Endothelial cell of umbilical vein (primary cell): ENCODE measurements at regions of chr17 and their contacts with region 1.

Region 1: GRCh38 chr17:915538-916201 is 63.9 kb downstream of the NXN start:
- DNase-seq: peak; percentile 94
- H3K4me3 ChIP-seq: peak overlapping the region in 1 of 3 experiments; percentile 0
- H3K27ac ChIP-seq: peak overlapping the region; percentile 79
- H3K4me1 ChIP-seq: peaks cover 31% of the 10 kb centered on the region
- H3K27me3 ChIP-seq: no peaks in the 10 kb centered on the region
- CTCF ChIP-seq: no peak
- POLR2A ChIP-seq: no peak

Region 2: DNA sequence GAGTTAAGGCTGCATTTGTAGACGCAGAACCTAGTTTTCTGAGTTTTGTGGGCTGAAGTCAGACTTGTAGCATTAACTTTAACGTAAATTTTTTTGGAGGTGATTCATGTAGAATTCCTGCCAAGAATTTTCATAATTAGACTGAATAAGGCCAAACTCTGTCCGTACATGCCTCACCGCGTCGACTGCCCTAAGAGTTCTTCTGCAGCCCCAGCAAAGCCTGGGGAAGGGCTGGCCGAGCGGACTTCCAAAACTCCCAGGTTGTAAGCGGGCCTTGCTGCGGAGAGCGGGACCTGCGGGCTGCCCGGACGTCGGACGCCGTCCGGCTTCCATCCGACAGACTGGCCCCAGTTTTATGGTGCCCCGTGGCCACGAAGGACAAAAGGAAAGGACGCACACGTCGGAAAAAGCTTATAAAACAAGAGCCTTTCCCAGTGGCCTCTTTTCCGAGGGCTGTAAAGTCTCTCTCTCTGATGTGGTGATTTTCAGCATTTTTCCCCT is 11.6 kb before region 1 on chr17:
- CTCF ChIA-PET with region 1: interaction called, 18 read pairs
- POLR2A ChIA-PET with region 1: no interaction called
- dilution Hi-C with region 1: no loop called
- intact Hi-C with region 1: no loop called
- DNase-seq: peak; percentile 77
- H3K4me3 ChIP-seq: no peak overlapping the region
- H3K27ac ChIP-seq: peak overlapping the region; percentile 22
- H3K4me1 ChIP-seq: peaks cover 9% of the 10 kb centered on the region
- H3K27me3 ChIP-seq: no peaks in the 10 kb centered on the region
- CTCF ChIP-seq: no peak
- POLR2A ChIP-seq: no peak

Region 3: GRCh38 chr17:927611-928461 is 12.2 kb after region 1 on chr17:
- CTCF ChIA-PET with region 1: interaction called, 13 read pairs
- POLR2A ChIA-PET with region 1: no interaction called
- dilution Hi-C with region 1: no loop called
- intact Hi-C with region 1: loop called (anchors 1 kb)
- DNase-seq: peak; percentile 70
- H3K4me3 ChIP-seq: no peak overlapping the region
- H3K27ac ChIP-seq: peak overlapping the region; percentile 45
- H3K4me1 ChIP-seq: peaks cover 14% of the 10 kb centered on the region
- H3K27me3 ChIP-seq: no peaks in the 10 kb centered on the region
- CTCF ChIP-seq: no peak
- POLR2A ChIP-seq: no peak

Region 4: GRCh38 chr17:933312-934083 is 17.8 kb after region 1 on chr17:
- CTCF ChIA-PET with region 1: interaction called, 13 read pairs
- POLR2A ChIA-PET with region 1: interaction called, 5 read pairs
- dilution Hi-C with region 1: no loop called
- intact Hi-C with region 1: loop called (anchors 1 kb)
- DNase-seq: peak; percentile 94
- H3K4me3 ChIP-seq: peak overlapping the region in 1 of 3 experiments; percentile 39
- H3K27ac ChIP-seq: peak overlapping the region; percentile 81
- H3K4me1 ChIP-seq: peaks cover 11% of the 10 kb centered on the region
- H3K27me3 ChIP-seq: no peaks in the 10 kb centered on the region
- CTCF ChIP-seq: no peak
- POLR2A ChIP-seq: peak; percentile 17

Region 5: GRCh38 chr17:951325-952132 is 35.9 kb after region 1 on chr17:
- CTCF ChIA-PET with region 1: no interaction called
- POLR2A ChIA-PET with region 1: no interaction called
- dilution Hi-C with region 1: no loop called
- intact Hi-C with region 1: loop called (anchors 5 kb)
- DNase-seq: no peak
- H3K4me3 ChIP-seq: no peak overlapping the region
- H3K27ac ChIP-seq: no peak overlapping the region
- H3K4me1 ChIP-seq: peaks cover 5% of the 10 kb centered on the region
- H3K27me3 ChIP-seq: no peaks in the 10 kb centered on the region
- CTCF ChIP-seq: no peak
- POLR2A ChIP-seq: no peak

Region 6: GRCh38 chr17:1206026-1206777 is 290.5 kb after region 1 on chr17:
- CTCF ChIA-PET with region 1: no interaction called
- POLR2A ChIA-PET with region 1: no interaction called
- dilution Hi-C with region 1: no loop called
- intact Hi-C with region 1: no loop called
- DNase-seq: no peak
- H3K4me3 ChIP-seq: no peak overlapping the region
- H3K27ac ChIP-seq: no peak overlapping the region
- H3K4me1 ChIP-seq: peaks cover 4% of the 10 kb centered on the region
- H3K27me3 ChIP-seq: peaks cover 6 to 11% of the 10 kb centered on the region in 2 experiments
- CTCF ChIP-seq: no peak
- POLR2A ChIP-seq: no peak